Vagina (tissue), 2 donors: ENCODE measurements at regions of chr18 and their contacts with region 1.

Region 1: DNA sequence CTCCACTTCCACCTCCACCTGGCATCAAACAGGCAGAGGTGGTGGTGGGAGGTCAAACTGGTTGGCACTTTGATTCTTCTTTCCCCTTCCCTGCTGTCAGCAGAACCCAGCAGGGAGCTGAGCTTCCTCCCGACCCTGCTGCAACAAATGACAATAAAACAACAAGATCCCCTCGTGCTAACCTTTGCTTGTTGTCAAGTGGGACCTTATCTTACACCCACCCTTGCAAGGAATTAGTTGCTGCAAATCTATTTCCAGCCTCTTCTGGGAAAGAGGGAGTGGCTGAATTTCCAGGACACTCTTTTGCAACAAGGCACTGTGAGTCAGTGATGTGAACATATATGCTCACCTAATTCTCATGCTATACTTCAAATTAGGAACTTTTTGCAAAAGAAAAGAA is 655.1 kb downstream of the DSC3 start:
- DNase-seq: no peak
- H3K4me3 ChIP-seq: no peak overlapping the region
- H3K27ac ChIP-seq: no peak overlapping the region
- H3K4me1 ChIP-seq: no peaks in the 10 kb centered on the region
- H3K27me3 ChIP-seq: no peaks in the 10 kb centered on the region
- CTCF ChIP-seq: no peak
- POLR2A ChIP-seq: no peak

Region 2: GRCh38 chr18:30328839-30329238 is 58.6 kb before region 1 on chr18:
- intact Hi-C with region 1: loop called (anchors 10 kb)
- DNase-seq: no peak
- H3K4me3 ChIP-seq: no peak overlapping the region
- H3K27ac ChIP-seq: no peak overlapping the region
- H3K4me1 ChIP-seq: no peaks in the 10 kb centered on the region
- H3K27me3 ChIP-seq: no peaks in the 10 kb centered on the region
- CTCF ChIP-seq: no peak
- POLR2A ChIP-seq: no peak